Natural killer cell (primary cell): ENCODE measurements at regions of chr10 and their contacts with region 1.

Region 1: GRCh38 chr10:115710172-115710571 is 562.8 kb downstream of the GFRA1 start:
- DNase-seq: no peak
- ATAC-seq: no peak
- H3K4me3 ChIP-seq: no peak overlapping the region
- H3K4me3 Mint-ChIP-seq: no peak overlapping the region
- H3K27ac ChIP-seq: no peak overlapping the region
- H3K27ac Mint-ChIP-seq: no peak overlapping the region
- H3K4me1 ChIP-seq: no peaks in the 10 kb centered on the region
- H3K4me1 Mint-ChIP-seq: no peaks in the 10 kb centered on the region
- H3K27me3 ChIP-seq: no peaks in the 10 kb centered on the region
- H3K27me3 Mint-ChIP-seq: no peaks in the 10 kb centered on the region
- CTCF ChIP-seq: no peak

Region 2: DNA sequence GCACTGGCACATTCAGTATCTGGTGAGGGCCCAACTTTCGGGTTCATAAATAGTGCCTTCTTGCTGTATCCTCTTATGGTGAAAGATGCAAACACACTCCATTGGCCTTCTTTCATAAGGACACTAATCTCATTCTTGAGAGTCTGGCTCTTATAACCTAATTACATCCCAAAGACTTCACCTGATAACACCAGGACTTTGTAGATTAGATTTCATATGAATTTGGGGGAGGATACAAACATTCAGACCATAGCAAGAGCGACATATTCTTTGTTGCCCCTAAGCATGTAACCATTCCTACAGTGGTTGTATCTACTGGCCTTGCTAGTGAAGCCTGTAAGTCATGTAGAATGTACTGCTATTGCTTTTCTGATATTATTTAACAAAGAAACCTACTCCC is 37.6 kb after region 1 on chr10:
- intact Hi-C with region 1: loop called (anchors 2 kb)
- DNase-seq: no peak
- ATAC-seq: no peak
- H3K4me3 ChIP-seq: no peak overlapping the region
- H3K4me3 Mint-ChIP-seq: no peak overlapping the region
- H3K27ac ChIP-seq: no peak overlapping the region
- H3K27ac Mint-ChIP-seq: no peak overlapping the region
- H3K4me1 ChIP-seq: no peaks in the 10 kb centered on the region
- H3K4me1 Mint-ChIP-seq: no peaks in the 10 kb centered on the region
- H3K27me3 ChIP-seq: no peaks in the 10 kb centered on the region
- H3K27me3 Mint-ChIP-seq: no peaks in the 10 kb centered on the region
- CTCF ChIP-seq: no peak

Region 3: DNA sequence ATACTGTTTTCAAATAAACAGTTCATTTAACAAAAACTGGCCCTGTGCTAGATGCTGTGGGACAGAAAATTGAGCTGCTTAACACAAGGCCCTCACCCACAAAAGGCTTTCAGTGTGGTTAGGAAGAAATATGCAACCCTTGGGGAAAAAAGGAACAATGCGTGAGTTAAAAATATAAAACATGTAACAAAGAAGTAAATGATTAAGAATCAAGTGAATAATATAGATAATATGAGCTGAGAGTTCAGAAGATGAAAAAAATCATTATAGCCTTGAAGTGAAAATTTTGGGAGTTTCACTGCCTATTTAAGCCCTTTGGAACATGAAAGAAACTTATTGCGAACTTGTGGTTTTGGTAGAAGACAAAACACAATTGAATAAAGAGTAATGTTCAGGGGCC is 67.5 kb after region 1 on chr10:
- intact Hi-C with region 1: no loop called
- DNase-seq: no peak
- ATAC-seq: no peak
- H3K4me3 ChIP-seq: no peak overlapping the region
- H3K4me3 Mint-ChIP-seq: no peak overlapping the region
- H3K27ac ChIP-seq: no peak overlapping the region
- H3K27ac Mint-ChIP-seq: no peak overlapping the region
- H3K4me1 ChIP-seq: no peaks in the 10 kb centered on the region
- H3K4me1 Mint-ChIP-seq: no peaks in the 10 kb centered on the region
- H3K27me3 ChIP-seq: no peaks in the 10 kb centered on the region
- H3K27me3 Mint-ChIP-seq: no peaks in the 10 kb centered on the region
- CTCF ChIP-seq: no peak